ENCODE measurements at regions of chr3 and their contacts with region 1.

Region 1: GRCh38 chr3:113844622-113845222 is 6.1 kb downstream of the GRAMD1C start:
- DNase-seq: no peak
- ATAC-seq: peak; percentile 78
- H3K4me3 ChIP-seq: no peak overlapping the region
- H3K27ac ChIP-seq: no peak overlapping the region
- H3K4me1 ChIP-seq: no peaks in the 10 kb centered on the region
- H3K27me3 ChIP-seq: no peaks in the 10 kb centered on the region
- CTCF ChIP-seq: peak; percentile 40 to 58 (median 48)
- EP300 ChIP-seq: no peak
- POLR2A ChIP-seq: no peak
- RAD21 ChIP-seq: peak; percentile 64

Region 2: DNA sequence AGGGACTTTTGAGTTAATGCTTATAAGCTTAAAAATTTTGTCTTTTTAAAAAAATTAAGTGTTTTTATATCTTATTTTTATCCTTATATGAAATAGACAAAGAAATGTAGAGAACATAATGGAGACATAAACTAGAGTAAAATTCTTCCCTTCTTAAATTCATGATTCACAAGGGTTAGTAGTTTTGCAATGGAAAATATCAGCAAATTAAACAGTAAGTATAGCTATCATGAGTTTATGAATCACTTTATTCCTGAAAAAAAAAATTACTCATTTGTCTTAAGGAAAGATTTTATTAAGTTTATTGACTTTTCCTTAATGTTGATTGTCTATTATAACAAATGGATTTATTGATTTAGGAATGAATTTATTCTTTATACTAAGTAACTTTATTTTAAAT is 93.6 kb before region 1 on chr3:
- CTCF ChIA-PET with region 1: interaction called, 12 read pairs
- POLR2A ChIA-PET with region 1: interaction called, 5 read pairs
- RAD21 ChIA-PET with region 1: interaction called, 9 read pairs
- SMC1A ChIA-PET with region 1: interaction called, 9 read pairs
- in situ Hi-C with region 1: no loop called
- intact Hi-C with region 1: loop called (anchors 2 kb)
- DNase-seq: no peak
- ATAC-seq: no peak
- H3K4me3 ChIP-seq: no peak overlapping the region
- H3K27ac ChIP-seq: no peak overlapping the region
- H3K4me1 ChIP-seq: peaks cover 10% of the 10 kb centered on the region; the same call in 1 of the 2 replicates
- H3K27me3 ChIP-seq: no peaks in the 10 kb centered on the region
- CTCF ChIP-seq: no peak
- EP300 ChIP-seq: no peak
- POLR2A ChIP-seq: no peak
- RAD21 ChIP-seq: no peak

Region 3: DNA sequence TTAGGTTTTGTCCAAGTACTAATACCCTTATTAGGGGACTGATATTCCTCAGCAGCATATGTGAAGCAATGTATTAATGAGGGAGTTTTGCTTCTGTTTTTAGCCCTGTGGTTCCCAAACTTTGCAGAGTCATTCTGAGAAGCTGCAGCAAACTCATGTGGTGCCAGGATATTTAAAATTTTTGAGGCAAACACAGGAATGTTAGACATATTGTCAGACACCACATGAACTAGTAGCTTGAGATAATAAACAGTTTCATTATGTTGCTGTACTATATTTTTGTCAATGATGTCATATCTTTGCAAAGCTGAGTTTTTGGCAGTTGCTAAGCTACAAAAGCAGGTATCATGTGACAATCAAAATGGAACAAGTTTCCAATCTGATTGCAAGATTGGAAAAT is 61.3 kb before region 1 on chr3:
- CTCF ChIA-PET with region 1: interaction called, 16 read pairs
- POLR2A ChIA-PET with region 1: no interaction called
- RAD21 ChIA-PET with region 1: no interaction called
- SMC1A ChIA-PET with region 1: interaction called, 3 read pairs
- in situ Hi-C with region 1: no loop called
- intact Hi-C with region 1: no loop called
- DNase-seq: no peak
- ATAC-seq: peak; percentile 91
- H3K4me3 ChIP-seq: no peak overlapping the region
- H3K27ac ChIP-seq: no peak overlapping the region
- H3K4me1 ChIP-seq: peaks cover 7% of the 10 kb centered on the region
- H3K27me3 ChIP-seq: no peaks in the 10 kb centered on the region
- CTCF ChIP-seq: no peak
- EP300 ChIP-seq: peak in 1 of 2 experiments; percentile 51; a peak in 1 of 4 replicates
- POLR2A ChIP-seq: no peak
- RAD21 ChIP-seq: no peak

Region 4: GRCh38 chr3:113825090-113825489 is 19.6 kb before region 1 on chr3:
- CTCF ChIA-PET with region 1: interaction called, 27 read pairs
- POLR2A ChIA-PET with region 1: interaction called, 5 read pairs
- RAD21 ChIA-PET with region 1: interaction called, 3 read pairs
- SMC1A ChIA-PET with region 1: interaction called, 7 read pairs
- in situ Hi-C with region 1: no loop called
- intact Hi-C with region 1: no loop called
- DNase-seq: peak; percentile 86
- ATAC-seq: peak; percentile 85
- H3K4me3 ChIP-seq: peak overlapping the region; percentile 18; the same call in 1 of the 2 replicates
- H3K27ac ChIP-seq: peak overlapping the region; percentile 49; the same call in 1 of the 2 replicates
- H3K4me1 ChIP-seq: peaks cover 41% of the 10 kb centered on the region
- H3K27me3 ChIP-seq: no peaks in the 10 kb centered on the region
- CTCF ChIP-seq: peak in 2 of 3 experiments; percentile 39 to 40; a peak in 2 of 6 replicates
- EP300 ChIP-seq: peak; percentile 34 to 65; a peak in 2 of 4 replicates
- POLR2A ChIP-seq: no peak
- RAD21 ChIP-seq: no peak

Region 5: GRCh38 chr3:113906568-113907140 is 61.9 kb after region 1 on chr3:
- CTCF ChIA-PET with region 1: interaction called, 31 read pairs
- POLR2A ChIA-PET with region 1: no interaction called
- RAD21 ChIA-PET with region 1: interaction called, 8 read pairs
- SMC1A ChIA-PET with region 1: interaction called, 108 read pairs
- in situ Hi-C with region 1: loop called (anchors 5 kb)
- intact Hi-C with region 1: no loop called
- DNase-seq: no peak
- ATAC-seq: no peak
- H3K4me3 ChIP-seq: no peak overlapping the region
- H3K27ac ChIP-seq: no peak overlapping the region
- H3K4me1 ChIP-seq: no peaks in the 10 kb centered on the region
- H3K27me3 ChIP-seq: no peaks in the 10 kb centered on the region
- CTCF ChIP-seq: no peak
- EP300 ChIP-seq: no peak
- POLR2A ChIP-seq: no peak
- RAD21 ChIP-seq: no peak

Region 6: DNA sequence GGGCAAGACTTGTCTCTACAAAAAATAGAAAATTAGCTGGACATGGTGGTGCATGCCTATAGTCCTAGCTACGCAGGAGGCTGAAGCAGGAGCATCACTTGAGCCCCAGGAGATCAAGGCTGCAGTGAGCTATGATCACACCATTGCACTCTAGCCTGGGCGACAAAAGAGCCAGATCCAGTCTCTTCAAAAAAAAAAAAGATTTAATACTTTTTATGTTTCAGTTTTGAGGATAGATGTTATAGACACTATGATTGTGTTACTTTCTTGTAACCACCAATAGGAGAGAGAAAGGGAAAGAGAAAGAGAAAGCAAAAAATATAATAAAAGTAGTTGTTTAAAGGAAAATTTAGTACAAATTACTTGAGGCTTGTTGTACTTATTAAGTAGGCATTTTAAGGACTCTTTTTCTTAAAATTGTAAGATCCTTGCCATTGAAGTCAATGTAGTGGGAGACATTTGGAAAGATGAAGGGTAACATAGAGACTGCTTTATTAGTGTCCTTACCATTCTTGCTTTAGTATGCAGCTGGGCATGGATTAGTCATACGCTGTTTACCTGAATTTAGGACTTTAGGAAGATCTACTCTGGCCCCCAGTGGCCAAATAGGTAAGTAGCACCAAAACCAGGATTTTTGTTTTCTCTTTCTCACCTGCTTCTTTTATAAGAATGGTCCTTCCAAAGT is 68.0 kb after region 1 on chr3:
- CTCF ChIA-PET with region 1: interaction called, 84 read pairs
- POLR2A ChIA-PET with region 1: no interaction called
- RAD21 ChIA-PET with region 1: interaction called, 45 read pairs
- SMC1A ChIA-PET with region 1: interaction called, 108 read pairs
- in situ Hi-C with region 1: loop called (anchors 5 kb)
- intact Hi-C with region 1: no loop called
- DNase-seq: peak; percentile 35
- ATAC-seq: peak; percentile 98
- H3K4me3 ChIP-seq: no peak overlapping the region
- H3K27ac ChIP-seq: no peak overlapping the region
- H3K4me1 ChIP-seq: no peaks in the 10 kb centered on the region
- H3K27me3 ChIP-seq: no peaks in the 10 kb centered on the region
- CTCF ChIP-seq: peak; percentile 76 to 89 (median 79)
- EP300 ChIP-seq: no peak
- POLR2A ChIP-seq: no peak
- RAD21 ChIP-seq: peak; percentile 95

Region 7: GRCh38 chr3:114056130-114057010 is 211.6 kb after region 1 on chr3 and contains the starts of genes CCDC191 and QTRT2:
- CTCF ChIA-PET with region 1: no interaction called
- POLR2A ChIA-PET with region 1: no interaction called
- RAD21 ChIA-PET with region 1: no interaction called
- SMC1A ChIA-PET with region 1: interaction called, 3 read pairs
- in situ Hi-C with region 1: no loop called
- intact Hi-C with region 1: loop called (anchors 10 kb)
- DNase-seq: peak; percentile 97
- ATAC-seq: peak; percentile 98
- H3K4me3 ChIP-seq: peak within 1 kb of the TSS; percentile 92
- H3K27ac ChIP-seq: peak within 1 kb of the TSS; percentile 72
- H3K4me1 ChIP-seq: 0 out of 2 replicates have a peak, but pooled peaks cover 2% of the 10 kb centered on the region
- H3K27me3 ChIP-seq: no peaks in the 10 kb centered on the region
- CTCF ChIP-seq: no peak
- EP300 ChIP-seq: peak in 1 of 2 experiments; percentile 77; a peak in 1 of 4 replicates
- POLR2A ChIP-seq: peak; percentile 54
- RAD21 ChIP-seq: no peak
- polyA plus RNA-seq, gene CCDC191: 1.3 to 1.6 TPM
- polyA plus RNA-seq, gene QTRT2: 17.8 to 33.5 TPM

Measured in GM12878 (cell line).